BJ (cell line): ENCODE measurements at regions of chr18 and their contacts with region 1.

Region 1: DNA sequence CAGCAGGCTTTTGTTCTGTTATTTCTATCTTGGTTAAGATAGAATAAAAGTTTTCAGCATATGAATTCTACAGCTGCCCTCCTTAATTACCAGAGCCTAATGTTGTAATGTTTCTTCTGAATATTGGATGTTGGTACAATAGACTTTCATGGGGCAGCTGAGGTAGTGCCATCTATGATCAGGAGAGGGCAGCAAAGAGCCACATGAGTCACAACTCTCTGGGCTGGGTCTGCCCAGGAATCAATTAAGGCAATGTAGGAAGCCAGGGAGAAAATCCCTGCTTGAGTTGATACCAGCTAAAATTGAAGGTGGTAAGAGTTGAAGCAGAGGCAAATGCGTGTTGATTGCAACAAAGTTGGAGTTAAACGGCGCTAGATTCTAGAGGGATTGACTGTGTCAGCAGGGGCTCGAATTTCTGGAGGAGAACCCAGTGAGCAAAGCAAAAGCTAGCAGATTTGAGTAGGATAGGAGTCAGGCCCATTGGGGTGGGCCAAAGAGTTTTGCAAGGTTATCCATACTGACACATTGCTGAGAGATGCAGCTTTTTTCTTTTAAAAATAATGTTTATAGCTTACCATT is 10.6 kb upstream of the MC5R start:
- DNase-seq: peak; percentile 4
- H3K4me3 ChIP-seq: no peak overlapping the region
- H3K27me3 ChIP-seq: no peaks in the 10 kb centered on the region
- CTCF ChIP-seq: peak; percentile 85

Region 2: DNA sequence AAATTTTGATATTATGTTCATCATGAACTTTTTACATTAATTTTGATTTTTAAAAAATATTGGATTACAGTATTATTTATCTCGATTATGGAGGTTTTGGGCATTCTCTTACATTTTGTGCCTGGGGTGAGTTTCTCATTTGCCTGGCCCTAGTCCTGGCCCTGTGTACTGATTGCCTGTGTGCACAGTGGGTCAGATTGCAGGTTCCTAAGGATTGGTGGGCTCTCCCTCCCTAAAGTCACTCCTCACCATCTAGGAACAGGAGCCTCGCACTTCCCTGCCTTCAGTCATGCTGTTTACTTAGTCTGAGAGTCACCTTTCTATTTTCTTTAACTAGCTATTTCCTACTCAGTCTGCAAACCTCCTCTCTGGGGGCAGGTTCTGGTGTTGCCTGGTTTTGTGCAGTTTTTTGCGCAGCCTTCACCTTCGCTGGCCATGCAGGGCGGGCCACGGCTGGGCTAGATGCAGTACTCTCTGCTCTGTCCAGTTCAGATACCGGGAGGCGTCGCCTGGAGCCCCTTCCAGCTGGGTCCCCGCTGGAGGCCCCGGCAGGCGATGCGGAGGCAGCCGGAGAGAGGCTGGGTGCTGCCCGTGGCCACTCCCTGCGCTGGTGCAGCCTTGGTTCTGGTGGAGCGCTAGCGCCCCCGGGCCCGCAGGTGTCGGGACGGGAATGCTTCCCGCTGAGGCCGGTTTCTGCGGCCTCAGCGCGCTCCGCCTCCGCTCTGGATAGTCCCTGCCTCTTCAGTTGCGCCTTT is 12.7 kb before region 1 on chr18:
- CTCF ChIA-PET with region 1: interaction called, 10 read pairs
- POLR2A ChIA-PET with region 1: no interaction called
- DNase-seq: no peak
- H3K4me3 ChIP-seq: no peak overlapping the region
- H3K27me3 ChIP-seq: peaks cover 5% of the 10 kb centered on the region; the same call in 1 of the 2 replicates
- CTCF ChIP-seq: 0 out of 2 replicates have a peak, but pooled peaks have one; percentile 18

Region 3: GRCh38 chr18:13823707-13824395 is 10.5 kb after region 1 on chr18 and contains the start of gene MC5R:
- CTCF ChIA-PET with region 1: interaction called, 16 read pairs
- POLR2A ChIA-PET with region 1: no interaction called
- DNase-seq: no peak
- H3K4me3 ChIP-seq: peak within 1 kb of the TSS; percentile 8; the same call in 1 of the 2 replicates
- H3K27me3 ChIP-seq: no peaks in the 10 kb centered on the region
- CTCF ChIP-seq: peak; percentile 66
- polyA plus RNA-seq, gene MC5R: not detected in 2 replicates

Region 4: DNA sequence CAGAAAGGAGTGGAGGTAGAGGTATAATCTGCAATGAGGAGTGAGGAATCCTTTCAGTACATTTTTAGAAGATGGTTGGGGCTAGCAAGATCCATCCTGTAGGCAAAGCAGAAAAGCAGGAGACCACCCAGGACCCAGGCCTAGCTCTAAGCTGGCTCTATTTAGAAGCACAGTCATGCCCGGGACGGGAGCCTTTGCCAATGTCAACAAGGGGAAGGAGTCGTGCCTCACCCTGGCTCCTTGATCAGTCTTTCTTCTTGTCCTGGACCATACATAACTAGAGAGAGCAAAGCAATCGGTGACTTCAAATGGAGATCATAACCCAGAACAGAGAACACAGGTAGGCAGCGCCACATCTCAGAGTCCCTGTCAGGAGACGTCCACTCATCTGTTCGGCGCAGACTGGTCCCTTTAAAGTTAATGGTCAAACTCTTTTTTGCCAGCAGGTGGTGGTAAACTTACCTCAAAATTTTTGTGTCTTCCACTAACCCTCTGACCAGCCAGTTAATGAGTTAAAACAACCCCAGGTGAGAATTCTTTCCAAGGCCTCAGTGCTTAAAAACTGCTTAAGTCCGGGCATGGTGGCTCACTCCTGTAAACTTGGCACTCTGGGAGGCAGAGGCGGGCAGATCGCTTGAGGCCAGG is 18.6 kb after region 1 on chr18:
- CTCF ChIA-PET with region 1: interaction called, 10 read pairs
- POLR2A ChIA-PET with region 1: no interaction called
- DNase-seq: no peak
- H3K4me3 ChIP-seq: no peak overlapping the region
- H3K27me3 ChIP-seq: no peaks in the 10 kb centered on the region
- CTCF ChIP-seq: no peak

Region 5: GRCh38 chr18:14086458-14087231 is 273.3 kb after region 1 on chr18:
- CTCF ChIA-PET with region 1: interaction called, 24 read pairs
- POLR2A ChIA-PET with region 1: interaction called, 3 read pairs
- DNase-seq: no peak
- H3K4me3 ChIP-seq: no peak overlapping the region
- H3K27me3 ChIP-seq: no peaks in the 10 kb centered on the region
- CTCF ChIP-seq: peak; percentile 62